HCT116 (cell line): ENCODE measurements at regions of chr12 and their contacts with region 1.

Region 1: GRCh38 chr12:125533434-125534029 is 468.3 kb downstream of the AACS start:
- DNase-seq: no peak
- ATAC-seq: peak; percentile 97
- H3K4me3 ChIP-seq: no peak overlapping the region
- H3K27ac ChIP-seq: no peak overlapping the region
- H3K4me1 ChIP-seq: no peaks in the 10 kb centered on the region
- H3K27me3 ChIP-seq: no peaks in the 10 kb centered on the region
- CTCF ChIP-seq: peak; percentile 36 to 86 (median 81); a peak in 5 of 6 replicates
- POLR2A ChIP-seq: no peak
- RAD21 ChIP-seq: peak; percentile 70

Region 2: DNA sequence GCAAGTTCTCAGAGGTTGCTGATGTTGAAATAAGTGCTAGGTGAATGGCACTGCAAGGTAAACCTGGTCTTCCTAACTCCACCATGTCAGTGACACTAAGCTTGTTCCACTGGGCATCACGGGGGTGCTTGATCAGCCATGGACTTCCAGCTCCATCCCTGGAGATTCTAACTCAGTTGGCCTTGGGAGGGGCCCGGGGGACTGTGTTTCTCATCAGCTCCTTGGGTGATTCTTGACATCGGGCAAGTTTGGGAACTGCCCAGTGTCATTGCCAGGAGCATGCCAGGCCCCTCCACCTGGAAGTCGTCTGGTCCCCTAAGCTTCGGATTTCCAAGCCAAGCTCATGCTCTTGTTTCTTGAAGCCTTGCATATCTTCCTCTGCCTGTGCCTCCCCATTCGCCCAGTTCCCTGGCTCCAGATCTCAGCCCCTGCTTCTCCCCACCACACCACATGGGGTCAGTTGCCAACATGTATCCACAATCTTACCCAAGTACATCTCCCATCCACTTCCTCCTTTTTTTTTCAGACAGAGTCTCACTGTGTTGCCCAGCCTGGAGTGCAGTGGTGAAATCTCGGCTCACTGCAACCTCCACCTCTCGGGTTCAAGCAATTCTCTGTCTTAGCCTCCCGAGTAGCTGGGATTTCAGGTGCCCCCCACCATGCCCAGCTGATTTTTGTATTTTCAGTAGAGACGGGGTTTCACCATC is 1269.3 kb before region 1 on chr12:
- CTCF ChIA-PET with region 1: no interaction called
- POLR2A ChIA-PET with region 1: no interaction called
- RAD21 ChIA-PET with region 1: no interaction called
- intact Hi-C with region 1: no loop called
- DNase-seq: no peak
- ATAC-seq: no peak
- H3K4me3 ChIP-seq: no peak overlapping the region
- H3K27ac ChIP-seq: no peak overlapping the region
- H3K4me1 ChIP-seq: no peaks in the 10 kb centered on the region
- H3K27me3 ChIP-seq: peaks cover 4% of the 10 kb centered on the region; the same call in 1 of the 2 replicates
- CTCF ChIP-seq: no peak
- POLR2A ChIP-seq: no peak
- RAD21 ChIP-seq: no peak

Region 3: GRCh38 chr12:125240717-125241116 is 292.8 kb before region 1 on chr12:
- CTCF ChIA-PET with region 1: no interaction called
- POLR2A ChIA-PET with region 1: no interaction called
- RAD21 ChIA-PET with region 1: no interaction called
- intact Hi-C with region 1: loop called (anchors 1 kb)
- DNase-seq: no peak
- ATAC-seq: no peak
- H3K4me3 ChIP-seq: no peak overlapping the region
- H3K27ac ChIP-seq: no peak overlapping the region
- H3K4me1 ChIP-seq: no peaks in the 10 kb centered on the region
- H3K27me3 ChIP-seq: peaks cover 32% of the 10 kb centered on the region
- CTCF ChIP-seq: no peak
- POLR2A ChIP-seq: no peak
- RAD21 ChIP-seq: no peak

Region 4: DNA sequence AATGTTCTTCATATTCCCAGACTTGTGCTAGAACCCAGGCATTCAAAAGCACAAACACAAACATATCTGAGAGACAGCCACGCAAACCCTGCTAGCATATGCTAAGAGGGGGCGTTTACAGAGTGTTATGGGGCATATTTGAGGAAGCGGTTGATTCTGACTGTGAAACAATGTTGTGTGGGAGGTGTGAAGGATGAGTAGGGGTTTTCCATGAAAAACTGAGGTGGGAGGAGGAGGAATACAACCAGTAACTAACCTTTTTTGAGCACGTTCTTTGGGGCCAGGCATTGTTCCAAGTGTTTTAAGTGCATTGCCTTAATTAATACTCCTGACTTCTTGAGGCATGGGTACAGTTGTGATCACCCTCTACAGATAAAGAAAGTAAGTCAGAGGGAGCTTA is 31.2 kb after region 1 on chr12:
- CTCF ChIA-PET with region 1: no interaction called
- POLR2A ChIA-PET with region 1: no interaction called
- RAD21 ChIA-PET with region 1: no interaction called
- intact Hi-C with region 1: no loop called
- DNase-seq: no peak
- ATAC-seq: no peak
- H3K4me3 ChIP-seq: no peak overlapping the region
- H3K27ac ChIP-seq: no peak overlapping the region
- H3K4me1 ChIP-seq: no peaks in the 10 kb centered on the region
- H3K27me3 ChIP-seq: no peaks in the 10 kb centered on the region
- CTCF ChIP-seq: no peak
- POLR2A ChIP-seq: no peak
- RAD21 ChIP-seq: no peak

Region 5: DNA sequence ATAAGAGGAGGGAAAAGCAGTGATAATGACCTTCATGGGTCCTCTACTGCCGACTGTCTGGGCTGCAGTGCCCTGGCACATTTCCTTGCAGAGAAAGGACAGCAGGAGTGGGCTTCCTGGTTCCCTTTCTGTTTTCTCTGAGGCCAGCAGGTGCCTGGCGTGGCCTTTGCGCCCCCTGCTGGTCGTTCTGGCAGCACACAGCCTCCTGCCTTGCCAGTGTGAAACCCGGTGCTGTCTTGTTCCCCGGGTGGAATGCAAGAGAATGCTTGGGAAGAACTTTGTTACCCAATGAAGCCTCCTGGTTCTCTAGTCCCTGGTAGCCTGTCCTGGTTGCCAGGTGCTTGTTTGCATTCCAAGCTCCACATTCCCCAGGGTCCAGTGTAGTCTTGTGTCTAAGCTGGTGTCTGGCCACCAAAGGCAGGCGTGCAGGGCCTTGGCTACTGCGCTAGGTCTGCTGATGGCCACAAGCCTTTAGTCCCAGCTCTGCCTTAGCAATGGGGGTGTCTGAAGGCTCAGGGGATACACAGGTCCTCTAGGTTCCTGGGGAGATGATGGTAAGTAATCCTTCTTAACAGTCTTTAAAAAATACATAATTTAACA is 1341.0 kb after region 1 on chr12:
- CTCF ChIA-PET with region 1: no interaction called
- POLR2A ChIA-PET with region 1: no interaction called
- RAD21 ChIA-PET with region 1: no interaction called
- intact Hi-C with region 1: loop called (anchors 1 kb)
- DNase-seq: peak; percentile 50
- ATAC-seq: peak; percentile 99
- H3K4me3 ChIP-seq: no peak overlapping the region
- H3K27ac ChIP-seq: no peak overlapping the region
- H3K4me1 ChIP-seq: no peaks in the 10 kb centered on the region
- H3K27me3 ChIP-seq: 0 out of 2 replicates have a peak, but pooled peaks cover under 1% of the 10 kb centered on the region
- CTCF ChIP-seq: peak; percentile 69 to 99 (median 93); a peak in 5 of 6 replicates
- POLR2A ChIP-seq: no peak
- RAD21 ChIP-seq: peak; percentile 86

Region 6: GRCh38 chr12:127381048-127381668 is 1847.6 kb after region 1 on chr12:
- CTCF ChIA-PET with region 1: no interaction called
- POLR2A ChIA-PET with region 1: no interaction called
- RAD21 ChIA-PET with region 1: no interaction called
- intact Hi-C with region 1: loop called (anchors 1 kb)
- DNase-seq: peak; percentile 21
- ATAC-seq: peak; percentile 99
- H3K4me3 ChIP-seq: no peak overlapping the region
- H3K27ac ChIP-seq: no peak overlapping the region
- H3K4me1 ChIP-seq: no peaks in the 10 kb centered on the region
- H3K27me3 ChIP-seq: no peaks in the 10 kb centered on the region
- CTCF ChIP-seq: peak; percentile 74 to 93 (median 92)
- POLR2A ChIP-seq: no peak
- RAD21 ChIP-seq: peak; percentile 89